Naive thymus-derived CD4-positive, alpha-beta T cell (primary cell): ENCODE measurements at regions of chr10 and their contacts with region 1.

Region 1: DNA sequence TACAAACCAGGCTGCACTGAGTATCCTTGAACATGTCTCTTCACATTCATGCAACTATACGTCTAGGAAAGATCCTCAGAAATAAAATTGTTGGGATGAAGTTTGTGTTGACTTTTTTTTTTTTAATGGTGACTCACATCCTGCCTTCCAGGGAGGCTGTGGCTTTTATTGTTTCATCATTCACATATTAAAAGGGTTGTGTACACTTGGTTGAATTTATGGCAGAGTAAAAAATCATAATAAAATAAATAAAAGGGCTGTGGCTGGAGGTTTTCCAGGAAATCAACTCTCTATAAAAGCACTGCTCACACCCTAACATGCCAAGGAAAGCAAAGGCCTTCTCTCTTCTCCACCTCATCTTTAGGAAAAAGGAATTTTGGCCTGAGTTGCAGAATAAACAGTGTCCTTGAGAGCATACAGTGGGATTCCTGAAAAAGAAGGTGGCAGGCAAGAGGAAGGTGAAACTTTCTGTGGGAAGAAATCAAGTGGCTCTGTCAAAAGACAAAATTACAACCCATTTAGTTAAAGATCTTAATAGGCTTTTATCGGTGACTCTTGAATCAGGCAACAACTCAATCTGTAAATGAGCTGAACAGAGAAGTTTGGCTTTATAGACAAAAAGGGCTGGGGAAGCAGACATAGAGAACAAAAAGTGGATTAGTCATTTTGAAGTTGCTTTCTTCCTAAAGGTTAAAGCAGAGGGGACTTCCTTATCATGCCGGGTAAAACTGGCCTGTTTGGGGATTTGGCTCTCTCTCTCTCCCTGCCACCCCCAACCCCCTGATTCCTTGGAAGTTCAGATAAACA is 41.6 kb upstream of the FHIP2A start:
- DNase-seq: no peak
- ATAC-seq: no peak
- H3K4me3 ChIP-seq: no peak overlapping the region
- H3K4me3 Mint-ChIP-seq: no peak overlapping the region
- H3K27ac ChIP-seq: no peak overlapping the region
- H3K27ac Mint-ChIP-seq: no peak overlapping the region
- H3K4me1 ChIP-seq: no peaks in the 10 kb centered on the region
- H3K4me1 Mint-ChIP-seq: peaks cover 0 to 12% (median 0%) of the 10 kb centered on the region in 7 donors
- H3K27me3 ChIP-seq: no peaks in the 10 kb centered on the region
- H3K27me3 Mint-ChIP-seq: peaks cover 7 to 29% (median 20%) of the 10 kb centered on the region in 5 donors

Region 2: GRCh38 chr10:114083040-114083439 is 697.0 kb before region 1 on chr10:
- CTCF ChIA-PET with region 1: no interaction called
- POLR2A ChIA-PET with region 1: no interaction called
- intact Hi-C with region 1: loop called in 1 of 2 experiments (anchors 10 kb)
- DNase-seq: peak in 2 of 9 donors; percentile 24 to 38
- ATAC-seq: peak; percentile 18
- H3K4me3 ChIP-seq: no peak overlapping the region
- H3K4me3 Mint-ChIP-seq: no peak overlapping the region
- H3K27ac ChIP-seq: no peak overlapping the region
- H3K27ac Mint-ChIP-seq: peak overlapping the region in 1 of 9 donors; percentile 48
- H3K4me1 ChIP-seq: no peaks in the 10 kb centered on the region
- H3K4me1 Mint-ChIP-seq: no peaks in the 10 kb centered on the region
- H3K27me3 ChIP-seq: no peaks in the 10 kb centered on the region
- H3K27me3 Mint-ChIP-seq: peaks cover 0 to 31% (median 4%) of the 10 kb centered on the region in 5 donors

Region 3: GRCh38 chr10:114703377-114704107 is 76.5 kb before region 1 on chr10:
- CTCF ChIA-PET with region 1: no interaction called
- POLR2A ChIA-PET with region 1: no interaction called
- intact Hi-C with region 1: loop called in 1 of 2 experiments (anchors 5 kb)
- DNase-seq: peak in 7 of 9 donors; percentile 6 to 46 (median 24)
- ATAC-seq: peak; percentile 67
- H3K4me3 ChIP-seq: no peak overlapping the region
- H3K4me3 Mint-ChIP-seq: no peak overlapping the region
- H3K27ac ChIP-seq: no peak overlapping the region
- H3K27ac Mint-ChIP-seq: no peak overlapping the region
- H3K4me1 ChIP-seq: no peaks in the 10 kb centered on the region
- H3K4me1 Mint-ChIP-seq: no peaks in the 10 kb centered on the region
- H3K27me3 ChIP-seq: no peaks in the 10 kb centered on the region
- H3K27me3 Mint-ChIP-seq: peaks cover 0 to 45% (median 9%) of the 10 kb centered on the region in 5 donors